Pancreas (tissue), 10 donors: ENCODE measurements at regions of chr11 and their contacts with region 1.

Region 1: GRCh38 chr11:19742588-19743292 is 30.1 kb downstream of the NAV2 start:
- DNase-seq: peak; percentile 61 to 87 (median 82)
- ATAC-seq: peak; percentile 92 to 99 (median 98)
- H3K4me3 ChIP-seq: no peak overlapping the region
- H3K27ac ChIP-seq: no peak overlapping the region
- H3K4me1 ChIP-seq: no peaks in the 10 kb centered on the region
- H3K27me3 ChIP-seq: no peaks in the 10 kb centered on the region
- CTCF ChIP-seq: peak; percentile 79 to 88 (median 84)

Region 2: GRCh38 chr11:19561011-19561410 is 181.7 kb before region 1 on chr11:
- intact Hi-C with region 1: loop called (anchors 5 to 10 kb)
- DNase-seq: no peak
- ATAC-seq: no peak
- H3K4me3 ChIP-seq: no peak overlapping the region
- H3K27ac ChIP-seq: no peak overlapping the region
- H3K4me1 ChIP-seq: no peaks in the 10 kb centered on the region
- H3K27me3 ChIP-seq: no peaks in the 10 kb centered on the region
- CTCF ChIP-seq: no peak

Region 3: DNA sequence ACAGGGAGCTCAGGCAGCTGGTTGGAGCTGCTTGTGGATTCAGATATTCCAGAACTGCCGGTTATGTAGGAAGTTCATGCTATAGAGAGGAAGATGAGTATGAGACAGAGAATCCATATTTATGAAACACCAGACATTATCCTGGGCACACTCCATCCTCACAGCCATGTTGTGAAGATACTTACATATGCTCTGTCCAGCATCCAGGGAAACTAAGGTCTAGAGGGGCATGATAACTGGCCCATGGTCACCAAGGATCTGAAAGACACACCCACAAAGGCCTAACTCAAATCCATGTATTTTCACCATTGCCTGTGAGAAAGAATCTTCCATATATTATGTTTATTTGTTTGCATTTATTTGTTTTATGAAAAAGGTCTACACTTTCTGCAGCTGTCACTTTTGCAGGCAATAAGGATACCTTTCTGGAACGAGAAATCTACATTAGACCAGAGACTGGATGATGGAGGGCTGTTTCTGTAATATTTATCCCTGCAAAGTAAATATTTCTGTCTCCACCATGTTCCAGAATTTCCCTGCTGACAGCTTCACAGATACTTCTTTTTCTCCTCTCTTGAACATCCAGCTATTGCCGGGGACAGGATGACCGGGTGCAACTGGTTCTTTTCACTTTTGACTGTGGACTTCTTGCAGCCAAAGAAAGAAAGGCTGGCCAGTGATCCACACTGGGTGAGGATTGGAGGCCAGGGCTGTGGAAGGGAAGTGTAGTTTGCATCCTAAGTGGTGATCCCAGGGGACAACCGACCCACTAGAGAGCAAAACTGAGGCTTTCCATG is 176.0 kb before region 1 on chr11:
- intact Hi-C with region 1: loop called (anchors 5 to 10 kb)
- DNase-seq: no peak
- ATAC-seq: no peak
- H3K4me3 ChIP-seq: no peak overlapping the region
- H3K27ac ChIP-seq: no peak overlapping the region
- H3K4me1 ChIP-seq: no peaks in the 10 kb centered on the region
- H3K27me3 ChIP-seq: no peaks in the 10 kb centered on the region
- CTCF ChIP-seq: no peak

Region 4: DNA sequence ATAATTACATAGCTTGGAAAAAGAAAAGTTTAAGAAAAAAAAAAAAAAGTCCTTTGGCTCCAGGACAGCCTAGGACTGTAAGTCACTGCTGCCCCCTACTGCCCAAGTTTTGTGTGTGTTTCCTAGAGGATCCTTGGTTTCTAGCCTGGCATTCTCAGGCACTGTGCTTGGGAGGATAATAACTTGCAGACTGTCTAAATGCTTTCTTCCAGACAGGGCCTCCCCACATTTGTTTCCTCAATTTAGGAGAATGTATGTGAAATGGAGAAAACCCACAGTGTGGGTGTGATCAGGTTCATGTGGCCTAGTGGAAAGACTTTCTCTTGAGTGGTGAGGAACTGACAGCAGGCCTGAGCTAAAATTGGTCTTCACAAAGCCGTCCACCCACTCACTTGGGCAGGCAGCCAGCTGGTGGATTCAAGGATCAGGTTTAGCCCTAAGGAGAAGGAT is 160.9 kb after region 1 on chr11:
- intact Hi-C with region 1: loop called in 1 of 3 experiments (anchors 10 kb)
- DNase-seq: peak in 5 of 6 donors; percentile 70 to 83 (median 80)
- ATAC-seq: peak; percentile 75 to 87 (median 87)
- H3K4me3 ChIP-seq: no peak overlapping the region
- H3K27ac ChIP-seq: no peak overlapping the region
- H3K4me1 ChIP-seq: peaks cover 0 to 18% (median 12%) of the 10 kb centered on the region in 3 donors
- H3K27me3 ChIP-seq: no peaks in the 10 kb centered on the region
- CTCF ChIP-seq: peak; percentile 54 to 72 (median 64)

Region 5: GRCh38 chr11:20127671-20128527 is 385.2 kb after region 1 on chr11:
- intact Hi-C with region 1: loop called in 1 of 3 experiments (anchors 10 kb)
- DNase-seq: peak; percentile 51 to 90 (median 79)
- ATAC-seq: peak; percentile 83 to 87 (median 86)
- H3K4me3 ChIP-seq: no peak overlapping the region
- H3K27ac ChIP-seq: no peak overlapping the region
- H3K4me1 ChIP-seq: no peaks in the 10 kb centered on the region
- H3K27me3 ChIP-seq: no peaks in the 10 kb centered on the region
- CTCF ChIP-seq: peak; percentile 61 to 86 (median 66)